B cell (primary cell): ENCODE measurements at regions of chr11 and their contacts with region 1.

Region 1: GRCh38 chr11:62542750-62543567 is 3.6 kb downstream of the AHNAK start:
- DNase-seq: peak; percentile 84
- ATAC-seq: peak; percentile 44
- H3K4me3 ChIP-seq: peak overlapping the region in 4 of 5 experiments; percentile 38 to 99 (median 94)
- H3K4me3 Mint-ChIP-seq: peak overlapping the region; percentile 97
- H3K27ac ChIP-seq: peak overlapping the region; percentile 91 to 94
- H3K27ac Mint-ChIP-seq: peak overlapping the region; percentile 97
- H3K4me1 ChIP-seq: peaks cover 70 to 87% of the 10 kb centered on the region in 2 donors
- H3K4me1 Mint-ChIP-seq: peaks cover 84% of the 10 kb centered on the region
- H3K27me3 ChIP-seq: no peaks in the 10 kb centered on the region
- H3K27me3 Mint-ChIP-seq: no peaks in the 10 kb centered on the region
- CTCF ChIP-seq: peak; percentile 98

Region 2: GRCh38 chr11:62435846-62436660 is 106.9 kb before region 1 on chr11:
- CTCF ChIA-PET with region 1: interaction called, 10 read pairs
- POLR2A ChIA-PET with region 1: interaction called, 7 read pairs
- intact Hi-C with region 1: no loop called
- DNase-seq: peak; percentile 29
- ATAC-seq: peak; percentile 49
- H3K4me3 ChIP-seq: no peak overlapping the region
- H3K4me3 Mint-ChIP-seq: peak overlapping the region; percentile 5
- H3K27ac ChIP-seq: peak overlapping the region in 1 of 2 donors; percentile 8
- H3K27ac Mint-ChIP-seq: peak overlapping the region; percentile 53
- H3K4me1 ChIP-seq: peaks cover 21 to 37% of the 10 kb centered on the region in 2 donors
- H3K4me1 Mint-ChIP-seq: peaks cover 39% of the 10 kb centered on the region
- H3K27me3 ChIP-seq: no peaks in the 10 kb centered on the region
- H3K27me3 Mint-ChIP-seq: no peaks in the 10 kb centered on the region
- CTCF ChIP-seq: no peak

Region 3: DNA sequence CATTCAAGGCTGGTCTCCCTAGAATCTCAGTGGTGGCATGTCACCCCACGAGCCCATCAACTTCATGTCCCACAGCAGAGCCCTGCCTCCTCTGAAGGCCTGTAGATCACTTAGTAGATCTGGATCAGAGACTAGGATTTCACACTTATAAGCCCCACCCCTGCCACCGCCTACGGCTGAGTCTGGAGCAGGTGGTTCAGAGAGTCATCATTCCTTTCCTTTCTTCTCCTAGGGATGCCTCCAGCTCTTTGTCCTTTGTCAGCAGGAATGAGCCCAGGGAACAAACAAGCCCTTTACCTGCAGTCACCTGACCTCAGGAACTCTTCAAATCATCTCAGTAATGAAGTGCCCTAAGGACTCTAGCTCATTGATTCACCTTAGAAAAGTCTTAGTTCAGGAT is 86.3 kb before region 1 on chr11:
- CTCF ChIA-PET with region 1: no interaction called
- POLR2A ChIA-PET with region 1: no interaction called
- intact Hi-C with region 1: no loop called
- DNase-seq: no peak
- ATAC-seq: no peak
- H3K4me3 ChIP-seq: no peak overlapping the region
- H3K4me3 Mint-ChIP-seq: no peak overlapping the region
- H3K27ac ChIP-seq: no peak overlapping the region
- H3K27ac Mint-ChIP-seq: no peak overlapping the region
- H3K4me1 ChIP-seq: no peaks in the 10 kb centered on the region
- H3K4me1 Mint-ChIP-seq: peaks cover 2% of the 10 kb centered on the region
- H3K27me3 ChIP-seq: no peaks in the 10 kb centered on the region
- H3K27me3 Mint-ChIP-seq: no peaks in the 10 kb centered on the region
- CTCF ChIP-seq: no peak

Region 4: GRCh38 chr11:62497132-62497915 is 45.6 kb before region 1 on chr11:
- CTCF ChIA-PET with region 1: interaction called, 21 read pairs
- POLR2A ChIA-PET with region 1: interaction called, 3 read pairs
- intact Hi-C with region 1: loop called (anchors 5 kb)
- DNase-seq: peak; percentile 38
- ATAC-seq: peak; percentile 54
- H3K4me3 ChIP-seq: no peak overlapping the region
- H3K4me3 Mint-ChIP-seq: no peak overlapping the region
- H3K27ac ChIP-seq: no peak overlapping the region
- H3K27ac Mint-ChIP-seq: no peak overlapping the region
- H3K4me1 ChIP-seq: no peaks in the 10 kb centered on the region
- H3K4me1 Mint-ChIP-seq: no peaks in the 10 kb centered on the region
- H3K27me3 ChIP-seq: peaks cover 0 to 6% (median 2%) of the 10 kb centered on the region in 4 experiments
- H3K27me3 Mint-ChIP-seq: peaks cover 17% of the 10 kb centered on the region
- CTCF ChIP-seq: peak; percentile 21

Region 5: DNA sequence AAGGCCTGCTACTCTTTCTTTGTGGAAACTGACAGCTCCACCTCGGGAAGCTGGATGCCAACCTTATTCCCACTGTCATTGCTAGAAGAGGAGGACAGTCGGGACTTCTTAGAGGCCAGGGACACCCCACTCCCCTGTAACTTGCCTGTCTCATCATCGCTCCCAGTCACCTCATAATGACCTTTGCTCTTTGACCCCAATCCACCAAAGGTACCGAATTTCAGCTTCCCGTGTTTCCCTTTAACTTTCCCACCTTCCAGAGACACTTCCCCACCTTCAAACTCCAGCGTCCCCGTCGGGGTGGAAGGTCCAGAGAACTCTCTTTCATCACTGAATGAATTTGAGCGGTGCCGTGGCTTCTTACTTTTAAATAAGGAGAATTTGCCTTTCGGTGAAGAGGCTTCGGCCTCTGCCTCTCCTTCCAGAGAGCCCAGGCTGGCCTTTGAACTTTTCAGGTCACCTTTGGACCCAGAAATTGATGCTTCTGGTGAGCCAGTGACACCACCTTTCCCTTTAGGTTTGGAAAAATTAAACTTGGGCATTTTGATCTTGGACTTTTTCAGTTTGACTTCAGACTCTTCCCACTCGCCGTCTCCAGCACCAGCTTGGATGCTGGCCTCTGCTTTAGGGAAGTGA is 26.1 kb before region 1 on chr11:
- CTCF ChIA-PET with region 1: interaction called, 11 read pairs
- POLR2A ChIA-PET with region 1: no interaction called
- intact Hi-C with region 1: no loop called
- DNase-seq: no peak
- ATAC-seq: no peak
- H3K4me3 ChIP-seq: no peak overlapping the region
- H3K4me3 Mint-ChIP-seq: no peak overlapping the region
- H3K27ac ChIP-seq: no peak overlapping the region
- H3K27ac Mint-ChIP-seq: no peak overlapping the region
- H3K4me1 ChIP-seq: no peaks in the 10 kb centered on the region
- H3K4me1 Mint-ChIP-seq: peaks cover 8% of the 10 kb centered on the region
- H3K27me3 ChIP-seq: no peaks in the 10 kb centered on the region
- H3K27me3 Mint-ChIP-seq: no peaks in the 10 kb centered on the region
- CTCF ChIP-seq: no peak